ENCODE measurements at regions of chr3 and their contacts with region 1.

Region 1: DNA sequence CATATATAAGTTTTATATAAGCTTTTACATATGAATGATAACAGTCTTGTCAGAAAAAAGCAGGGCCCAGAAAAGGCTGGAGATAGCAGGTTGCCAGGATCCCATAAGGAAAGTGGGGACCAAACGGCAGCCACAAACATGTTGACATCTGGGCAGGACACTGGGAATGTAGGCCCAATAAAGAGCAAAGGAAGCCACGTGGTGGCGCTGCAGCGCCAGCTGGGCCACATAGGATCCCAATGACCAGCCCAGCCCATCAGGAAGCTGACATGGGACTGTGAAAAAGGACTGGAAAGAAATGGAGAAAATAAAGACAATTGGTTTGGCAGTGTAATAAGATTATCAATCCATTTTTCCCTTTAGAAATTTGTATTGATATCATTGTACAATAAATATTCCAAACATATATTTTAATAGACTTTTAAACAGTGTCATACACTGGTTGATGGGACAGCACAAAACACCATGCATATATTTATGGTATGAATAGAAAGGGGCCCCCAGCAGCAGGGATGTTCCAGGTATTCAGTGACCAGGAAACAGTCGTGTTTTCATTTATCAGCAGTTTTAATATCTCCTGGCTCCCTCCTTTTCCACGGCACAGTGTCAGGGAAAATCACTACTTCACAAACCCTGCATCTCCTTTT is 89.0 kb upstream of the STRIT1 start:
- DNase-seq: peak; percentile 69 to 76
- H3K4me3 ChIP-seq: no peak overlapping the region
- H3K4me3 Mint-ChIP-seq: no peak overlapping the region
- H3K27ac Mint-ChIP-seq: no peak overlapping the region
- H3K4me1 ChIP-seq: no peaks in the 10 kb centered on the region
- H3K4me1 Mint-ChIP-seq: peaks cover 11% of the 10 kb centered on the region
- H3K27me3 ChIP-seq: no peaks in the 10 kb centered on the region
- H3K27me3 Mint-ChIP-seq: peaks cover 4% of the 10 kb centered on the region
- CTCF ChIP-seq: peak; percentile 72 to 90

Region 2: DNA sequence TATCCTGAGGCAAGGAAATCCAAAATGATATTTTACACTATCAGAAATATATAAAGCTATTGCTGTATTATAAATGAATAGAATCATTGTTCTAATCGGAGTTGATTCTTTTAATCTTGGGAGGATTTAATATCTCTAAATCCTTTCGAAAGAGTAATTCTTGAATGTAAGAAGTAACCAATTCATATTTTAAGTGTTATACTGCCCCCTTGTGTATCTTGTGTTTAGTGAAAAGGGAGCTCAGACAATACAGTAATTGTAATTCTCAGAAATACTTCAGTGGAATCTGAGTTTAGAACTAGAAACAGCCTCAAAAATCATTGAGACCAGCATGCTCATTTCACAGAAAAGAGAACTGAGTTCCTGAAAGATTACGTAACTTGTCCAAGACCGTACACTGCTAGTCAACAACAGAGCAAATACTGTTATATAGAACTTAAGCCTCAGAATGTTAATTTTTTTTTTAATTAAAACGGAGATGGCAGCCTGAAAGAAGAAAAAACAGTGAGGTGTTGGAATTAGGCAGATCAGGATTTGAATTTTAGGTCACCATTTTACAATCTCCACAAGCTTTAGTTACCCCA is 319.5 kb after region 1 on chr3:
- CTCF ChIA-PET with region 1: interaction called, 20 read pairs
- POLR2A ChIA-PET with region 1: no interaction called
- intact Hi-C with region 1: loop called (anchors 1 kb)
- DNase-seq: peak in 1 of 2 experiments; percentile 50
- H3K4me3 ChIP-seq: no peak overlapping the region
- H3K4me3 Mint-ChIP-seq: no peak overlapping the region
- H3K27ac Mint-ChIP-seq: no peak overlapping the region
- H3K4me1 ChIP-seq: no peaks in the 10 kb centered on the region
- H3K4me1 Mint-ChIP-seq: no peaks in the 10 kb centered on the region
- H3K27me3 ChIP-seq: no peaks in the 10 kb centered on the region
- H3K27me3 Mint-ChIP-seq: no peaks in the 10 kb centered on the region
- CTCF ChIP-seq: peak; percentile 31 to 47

Region 3: GRCh38 chr3:155870133-155870944 is 487.8 kb after region 1 on chr3 and contains the start of gene GMPS:
- CTCF ChIA-PET with region 1: no interaction called
- POLR2A ChIA-PET with region 1: no interaction called
- intact Hi-C with region 1: loop called (anchors 1 kb)
- DNase-seq: peak; percentile 94 to 98
- H3K4me3 ChIP-seq: peak within 1 kb of the TSS; percentile 100
- H3K4me3 Mint-ChIP-seq: peak within 1 kb of the TSS; percentile 97
- H3K27ac Mint-ChIP-seq: peak within 1 kb of the TSS; percentile 95
- H3K4me1 ChIP-seq: peaks cover 12% of the 10 kb centered on the region
- H3K4me1 Mint-ChIP-seq: no peaks in the 10 kb centered on the region
- H3K27me3 ChIP-seq: no peaks in the 10 kb centered on the region
- H3K27me3 Mint-ChIP-seq: no peaks in the 10 kb centered on the region
- CTCF ChIP-seq: peak in 1 of 2 experiments; percentile 54
- total RNA-seq, gene GMPS: 90.7 and 102 TPM in 2 replicates

Measured in Caco-2 (cell line).